ENCODE measurements at regions of chr12 and their contacts with region 1.

Region 1: DNA sequence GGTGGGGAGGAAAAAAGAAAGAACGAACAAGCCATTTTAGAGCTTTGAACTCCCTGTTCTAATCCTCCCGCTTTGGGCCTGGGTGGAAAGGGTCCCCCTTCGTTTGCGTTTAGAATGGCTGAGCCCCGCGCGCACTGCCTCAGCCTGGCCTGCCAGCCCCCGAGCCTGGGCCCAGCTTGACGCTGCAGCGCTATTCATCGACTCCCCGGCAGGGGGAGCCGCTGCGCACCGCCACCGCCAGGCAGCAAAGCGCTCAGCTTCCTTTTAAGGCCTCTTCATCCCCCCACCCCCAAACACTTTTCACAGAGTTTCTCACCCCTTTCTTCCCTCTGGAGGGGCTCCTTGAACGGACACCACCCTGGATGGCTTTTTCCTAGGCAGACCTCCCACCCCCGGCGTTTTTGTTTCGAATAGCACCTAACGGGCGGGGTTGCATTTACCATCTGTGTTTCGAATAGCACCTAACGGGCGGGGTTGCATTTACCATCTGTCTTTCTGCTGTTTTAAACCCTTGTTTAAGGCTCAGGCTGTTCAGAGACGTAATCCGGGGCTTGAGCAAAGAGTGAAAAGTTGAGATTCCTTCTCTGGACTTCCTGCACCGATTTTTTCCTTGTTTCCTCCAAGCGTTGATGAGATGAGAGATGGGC is 56.4 kb upstream of the PIWIL1 start:
- DNase-seq: peak; percentile 15
- H3K4me3 ChIP-seq: no peak overlapping the region
- H3K27ac ChIP-seq: no peak overlapping the region
- H3K4me1 ChIP-seq: no peaks in the 10 kb centered on the region
- H3K27me3 ChIP-seq: no peaks in the 10 kb centered on the region
- CTCF ChIP-seq: peak; percentile 42 to 80 (median 56)
- EP300 ChIP-seq: no peak
- POLR2A ChIP-seq: no peak

Region 2: GRCh38 chr12:130127919-130128813 is 153.1 kb before region 1 on chr12:
- in situ Hi-C with region 1: no loop called
- intact Hi-C with region 1: no loop called
- DNase-seq: no peak
- H3K4me3 ChIP-seq: no peak overlapping the region
- H3K27ac ChIP-seq: peak overlapping the region; percentile 5 to 55 (median 18)
- H3K4me1 ChIP-seq: no peaks in the 10 kb centered on the region
- H3K27me3 ChIP-seq: no peaks in the 10 kb centered on the region
- CTCF ChIP-seq: no peak
- EP300 ChIP-seq: no peak
- POLR2A ChIP-seq: no peak

Region 3: GRCh38 chr12:130254461-130255276 is 26.6 kb before region 1 on chr12:
- in situ Hi-C with region 1: no loop called
- intact Hi-C with region 1: loop called (anchors 1 kb)
- DNase-seq: no peak
- H3K4me3 ChIP-seq: no peak overlapping the region
- H3K27ac ChIP-seq: no peak overlapping the region
- H3K4me1 ChIP-seq: no peaks in the 10 kb centered on the region
- H3K27me3 ChIP-seq: no peaks in the 10 kb centered on the region
- CTCF ChIP-seq: no peak
- EP300 ChIP-seq: no peak
- POLR2A ChIP-seq: no peak

Region 4: DNA sequence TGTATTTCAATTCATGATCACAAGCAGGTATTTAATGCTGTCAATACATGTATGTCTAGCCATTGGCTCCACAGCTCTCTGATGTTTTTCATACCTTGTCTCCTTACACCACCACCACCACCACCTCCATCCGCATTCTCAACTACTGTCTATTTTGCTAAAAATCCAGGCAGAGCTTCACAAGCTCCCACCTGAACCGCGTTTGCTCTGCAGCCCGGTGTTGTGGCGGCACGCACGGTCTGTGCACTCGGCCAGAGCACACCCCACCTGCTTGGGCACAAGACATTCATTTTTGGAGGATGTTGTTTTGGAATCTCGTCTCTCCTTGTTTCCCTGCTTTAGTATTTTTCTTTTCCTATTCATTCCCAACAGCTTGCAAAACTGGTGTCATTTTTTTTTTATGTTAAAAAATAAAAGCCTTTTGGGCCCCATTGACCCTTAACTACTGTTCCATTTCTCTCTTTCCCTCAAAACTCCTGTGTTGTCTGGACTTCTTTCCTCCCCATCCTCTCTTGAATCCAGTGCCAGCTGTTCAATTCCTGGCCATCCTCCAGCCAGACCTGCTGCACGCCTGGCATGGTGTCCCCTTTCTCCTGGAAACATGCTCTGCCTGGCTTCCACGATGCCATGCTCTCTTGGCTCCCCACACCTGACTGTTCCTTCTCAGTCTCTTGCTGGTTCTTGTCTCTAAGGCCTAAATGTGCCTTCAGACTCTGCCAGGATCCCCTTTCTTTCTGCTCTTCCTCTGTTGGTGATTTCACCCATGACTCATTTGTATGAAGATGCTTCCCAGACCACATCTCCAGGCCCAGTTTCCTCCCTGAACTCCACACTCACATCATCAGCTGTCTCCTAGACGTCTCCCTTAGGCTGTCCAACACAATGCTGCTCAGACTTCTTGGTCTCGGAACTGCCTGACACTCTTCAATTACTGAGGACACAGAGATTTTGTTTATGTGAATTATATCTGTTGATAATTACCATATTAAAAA is 94.3 kb after region 1 on chr12:
- in situ Hi-C with region 1: no loop called
- intact Hi-C with region 1: no loop called
- DNase-seq: no peak
- H3K4me3 ChIP-seq: no peak overlapping the region
- H3K27ac ChIP-seq: no peak overlapping the region
- H3K4me1 ChIP-seq: no peaks in the 10 kb centered on the region
- H3K27me3 ChIP-seq: peaks cover 22% of the 10 kb centered on the region
- CTCF ChIP-seq: no peak
- EP300 ChIP-seq: no peak
- POLR2A ChIP-seq: no peak

Region 5: DNA sequence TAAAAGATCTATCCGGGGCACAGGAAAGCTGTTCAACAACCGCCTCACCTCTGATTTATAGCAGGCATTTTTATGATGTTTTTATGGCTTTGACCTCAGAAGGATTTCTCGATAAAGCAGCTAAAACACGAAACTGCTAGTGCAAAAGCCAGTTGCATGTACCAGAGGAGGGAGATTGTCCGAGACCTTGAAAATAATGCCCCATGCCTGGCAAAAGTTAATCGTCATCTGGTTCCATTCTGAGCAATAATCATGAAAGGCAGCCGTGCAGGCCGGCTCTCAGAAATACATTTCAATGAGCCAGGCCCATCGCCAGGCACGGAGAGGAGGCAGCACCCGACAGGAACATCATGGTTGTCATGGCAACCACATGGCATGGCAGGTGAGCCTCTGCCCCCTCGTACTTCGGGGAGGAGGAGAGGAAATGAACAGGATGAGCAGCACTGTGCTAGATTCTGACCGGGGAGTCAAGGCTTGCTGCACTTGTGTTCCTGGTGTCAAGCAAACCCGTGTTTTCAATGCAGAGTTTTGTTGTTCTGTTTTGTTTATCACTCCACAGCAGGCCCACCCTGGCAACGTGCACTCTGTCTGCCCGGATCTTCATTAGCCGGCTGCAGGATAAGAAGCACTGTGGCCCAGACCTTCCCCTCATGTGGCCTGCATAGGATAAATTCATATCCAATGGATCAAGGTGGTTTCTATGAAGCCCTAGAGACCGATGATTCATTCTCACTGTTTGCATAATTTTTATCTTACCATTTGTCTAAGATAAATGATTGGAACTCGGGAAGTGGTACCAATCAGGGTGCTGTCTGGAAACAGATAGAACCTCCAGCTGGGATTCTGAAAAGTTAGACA is 274.6 kb after region 1 on chr12:
- in situ Hi-C with region 1: no loop called
- intact Hi-C with region 1: no loop called
- DNase-seq: no peak
- H3K4me3 ChIP-seq: no peak overlapping the region
- H3K27ac ChIP-seq: no peak overlapping the region
- H3K4me1 ChIP-seq: peaks cover 9 to 32% (median 17%) of the 10 kb centered on the region in 4 donors
- H3K27me3 ChIP-seq: peaks cover 4% of the 10 kb centered on the region
- CTCF ChIP-seq: no peak
- EP300 ChIP-seq: no peak
- POLR2A ChIP-seq: no peak